Mammary epithelial cell (primary cell): ENCODE measurements at regions of chr3 and their contacts with region 1.

Region 1: DNA sequence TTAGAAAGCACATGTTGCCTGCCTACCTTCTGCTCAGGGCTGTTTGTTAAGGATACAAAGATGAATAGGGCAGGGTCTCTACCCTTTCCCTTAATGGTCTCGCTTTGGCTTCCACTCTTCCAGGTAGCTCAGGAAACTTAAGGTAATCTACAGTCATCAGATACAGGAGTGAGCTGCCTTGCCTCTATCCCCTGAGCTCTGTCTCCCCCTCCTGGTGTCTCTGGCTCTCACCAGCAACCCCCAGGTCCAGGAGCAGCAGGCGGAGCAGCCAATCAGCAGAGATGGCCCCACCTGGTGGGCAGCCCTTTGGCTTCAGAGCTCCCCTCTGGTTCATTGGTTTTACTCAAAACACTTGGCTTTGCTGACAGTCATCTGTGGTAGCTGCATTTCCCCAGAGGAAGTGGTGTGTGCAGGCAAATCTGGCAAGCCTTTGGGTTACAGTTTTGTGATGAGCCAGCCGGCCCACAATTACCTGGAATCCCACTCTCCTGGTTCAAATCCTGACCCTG is 8.5 kb upstream of the CX3CR1 start:
- DNase-seq: peak; percentile 78
- H3K4me3 ChIP-seq: no peak overlapping the region
- H3K27ac ChIP-seq: no peak overlapping the region
- H3K4me1 ChIP-seq: no peaks in the 10 kb centered on the region
- H3K27me3 ChIP-seq: no peaks in the 10 kb centered on the region
- CTCF ChIP-seq: peak; percentile 97 to 98

Region 2: GRCh38 chr3:38969317-38970235 is 318.8 kb before region 1 on chr3:
- CTCF ChIA-PET with region 1: no interaction called
- dilution Hi-C with region 1: no loop called
- in situ Hi-C with region 1: no loop called
- intact Hi-C with region 1: no loop called
- DNase-seq: no peak
- H3K4me3 ChIP-seq: no peak overlapping the region
- H3K27ac ChIP-seq: no peak overlapping the region
- H3K4me1 ChIP-seq: peaks cover 11% of the 10 kb centered on the region
- H3K27me3 ChIP-seq: no peaks in the 10 kb centered on the region
- CTCF ChIP-seq: no peak

Region 3: GRCh38 chr3:39000008-39000450 is 288.3 kb before region 1 on chr3:
- CTCF ChIA-PET with region 1: interaction called, 3 read pairs
- dilution Hi-C with region 1: no loop called
- in situ Hi-C with region 1: no loop called
- intact Hi-C with region 1: loop called (anchors 1 kb)
- DNase-seq: peak; percentile 92
- H3K4me3 ChIP-seq: no peak overlapping the region
- H3K27ac ChIP-seq: no peak overlapping the region
- H3K4me1 ChIP-seq: peaks cover 4% of the 10 kb centered on the region
- H3K27me3 ChIP-seq: no peaks in the 10 kb centered on the region
- CTCF ChIP-seq: peak; percentile 90 to 94

Region 4: DNA sequence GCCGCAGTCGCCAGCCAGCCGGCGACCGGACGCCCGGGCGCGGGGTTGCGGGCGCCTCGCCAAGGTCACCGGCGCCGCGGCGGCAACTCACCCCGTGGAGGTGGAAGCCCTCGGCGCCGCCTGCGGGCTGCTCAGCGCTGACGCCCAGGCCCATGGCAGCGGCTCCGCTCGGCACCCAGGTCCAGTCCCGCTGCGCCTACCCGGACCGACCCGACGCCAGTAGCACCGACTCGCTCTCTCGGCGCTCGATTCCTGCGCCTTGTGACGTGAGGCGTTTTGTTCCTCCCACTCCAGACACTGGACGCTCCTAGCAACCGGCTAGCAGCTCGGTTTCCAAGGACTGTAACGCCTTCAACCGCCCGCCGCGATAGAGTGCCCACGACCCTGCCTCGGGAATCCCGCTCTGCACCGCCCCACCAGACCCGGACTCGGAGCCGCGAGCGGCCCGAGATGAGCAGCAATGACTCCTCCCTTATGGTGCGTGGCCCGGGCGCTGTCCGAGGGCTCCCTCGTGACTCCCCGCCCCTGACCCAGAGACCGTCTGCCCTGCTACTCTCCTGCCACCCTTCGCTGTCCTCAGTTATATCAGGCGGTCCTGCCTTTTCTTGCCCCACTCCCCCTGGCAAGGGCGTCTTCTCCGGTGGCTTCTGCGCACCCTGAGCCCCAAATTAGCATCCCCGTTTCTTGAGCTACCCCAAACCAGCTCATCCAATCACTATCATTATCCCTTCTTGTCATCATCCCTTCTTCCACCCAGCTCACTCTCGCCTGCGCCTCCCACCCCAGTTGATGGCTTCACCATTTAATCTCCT is 180.8 kb before region 1 on chr3 and contains the starts of genes GORASP1 and TTC21A:
- CTCF ChIA-PET with region 1: interaction called, 4 read pairs
- dilution Hi-C with region 1: loop called (anchors 5 kb)
- in situ Hi-C with region 1: loop called in 1 of 2 experiments (anchors 10 kb)
- intact Hi-C with region 1: no loop called
- DNase-seq: peak; percentile 81
- H3K4me3 ChIP-seq: peak within 1 kb of the TSS; percentile 72 to 95 (median 91)
- H3K27ac ChIP-seq: peak within 1 kb of the TSS; percentile 86
- H3K4me1 ChIP-seq: peaks cover 27% of the 10 kb centered on the region
- H3K27me3 ChIP-seq: no peaks in the 10 kb centered on the region
- CTCF ChIP-seq: no peak
- total RNA-seq, gene GORASP1: 47.0 to 51.3 TPM
- total RNA-seq, gene TTC21A: 5.2 to 5.7 TPM

Region 5: DNA sequence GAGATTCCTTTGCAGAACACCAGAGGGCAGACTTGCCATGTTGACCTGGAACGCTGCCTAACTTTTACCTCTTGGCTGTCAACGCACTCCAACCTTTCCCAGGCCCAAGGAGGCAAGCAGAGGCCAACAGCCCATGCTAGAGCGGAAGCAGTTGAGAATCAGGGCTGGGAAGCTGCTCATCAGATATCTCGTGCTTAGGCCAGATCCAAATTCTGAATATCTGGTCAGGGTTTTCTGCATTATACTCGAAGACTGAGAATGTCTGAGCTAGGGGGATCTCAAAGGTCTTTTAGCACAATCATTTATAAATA is 98.4 kb before region 1 on chr3:
- CTCF ChIA-PET with region 1: interaction called, 14 read pairs
- dilution Hi-C with region 1: loop called (anchors 5 kb)
- in situ Hi-C with region 1: loop called (anchors 5 kb)
- intact Hi-C with region 1: loop called (anchors 1 kb)
- DNase-seq: peak; percentile 58
- H3K4me3 ChIP-seq: no peak overlapping the region
- H3K27ac ChIP-seq: no peak overlapping the region
- H3K4me1 ChIP-seq: no peaks in the 10 kb centered on the region
- H3K27me3 ChIP-seq: no peaks in the 10 kb centered on the region
- CTCF ChIP-seq: peak; percentile 69 to 81

Region 6: DNA sequence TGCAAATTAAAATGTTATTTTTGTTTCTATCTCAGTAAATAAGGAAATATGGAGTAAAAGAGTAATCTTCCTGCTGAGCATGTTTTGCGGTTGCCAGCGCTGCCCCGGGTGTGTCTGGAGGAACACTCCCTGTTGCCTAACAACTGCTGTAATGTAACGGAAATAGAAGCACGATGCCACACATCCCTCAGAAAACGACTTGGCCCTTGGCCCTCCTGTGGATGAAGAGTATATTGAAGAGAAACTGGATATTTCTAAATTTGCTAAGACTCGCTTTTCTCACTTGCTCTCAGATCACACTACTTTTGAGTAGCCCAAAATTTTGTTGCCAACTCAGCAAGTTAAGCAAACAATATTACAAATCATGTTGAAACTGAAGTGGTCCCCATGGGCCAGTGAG is 27.4 kb before region 1 on chr3:
- CTCF ChIA-PET with region 1: no interaction called
- dilution Hi-C with region 1: no loop called
- in situ Hi-C with region 1: no loop called
- intact Hi-C with region 1: loop called (anchors 1 kb)
- DNase-seq: peak; percentile 89
- H3K4me3 ChIP-seq: no peak overlapping the region
- H3K27ac ChIP-seq: peak overlapping the region; percentile 70
- H3K4me1 ChIP-seq: peaks cover 6% of the 10 kb centered on the region
- H3K27me3 ChIP-seq: no peaks in the 10 kb centered on the region
- CTCF ChIP-seq: peak; percentile 43 to 62

Region 7: DNA sequence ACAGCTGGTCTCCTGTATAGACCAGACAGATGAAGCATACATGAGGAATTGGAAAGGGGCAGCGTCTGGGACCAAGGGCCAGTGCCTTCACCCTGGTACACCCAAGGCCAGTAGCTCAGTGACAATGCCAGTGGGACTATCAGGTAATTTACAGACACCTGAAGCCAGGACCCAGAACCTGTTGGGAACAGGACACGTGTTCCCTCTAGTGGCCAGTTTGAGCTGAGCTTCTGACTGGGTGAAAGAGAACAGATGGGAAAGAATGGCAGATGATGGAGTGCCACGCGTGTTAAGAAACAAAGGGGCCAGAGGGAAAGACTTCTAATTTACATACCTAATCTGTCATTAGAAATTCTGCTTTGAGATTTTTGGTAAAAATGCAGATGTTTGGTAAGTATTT is 89.7 kb after region 1 on chr3:
- CTCF ChIA-PET with region 1: interaction called, 11 read pairs
- dilution Hi-C with region 1: loop called (anchors 5 kb)
- in situ Hi-C with region 1: no loop called
- intact Hi-C with region 1: loop called (anchors 1 kb)
- DNase-seq: peak; percentile 43
- H3K4me3 ChIP-seq: no peak overlapping the region
- H3K27ac ChIP-seq: no peak overlapping the region
- H3K4me1 ChIP-seq: peaks cover 5% of the 10 kb centered on the region
- H3K27me3 ChIP-seq: no peaks in the 10 kb centered on the region
- CTCF ChIP-seq: peak; percentile 84 to 91